ENCODE measurements at regions of chr2 and their contacts with region 1.

Region 1: GRCh38 chr2:223837287-223838061 is at the start of gene AP1S3:
- DNase-seq: peak; percentile 91
- H3K4me3 Mint-ChIP-seq: peak within 1 kb of the TSS; percentile 90
- H3K27ac Mint-ChIP-seq: peak within 1 kb of the TSS; percentile 83
- H3K4me1 Mint-ChIP-seq: peaks cover 13% of the 10 kb centered on the region
- H3K27me3 Mint-ChIP-seq: no peaks in the 10 kb centered on the region
- total RNA-seq, gene AP1S3: 14.1 and 17.4 TPM in 2 replicates

Region 2: GRCh38 chr2:223727562-223727961 is 109.9 kb before region 1 on chr2:
- intact Hi-C with region 1: loop called (anchors 10 kb)
- DNase-seq: peak; percentile 79
- H3K4me3 Mint-ChIP-seq: no peak overlapping the region
- H3K27ac Mint-ChIP-seq: no peak overlapping the region
- H3K4me1 Mint-ChIP-seq: no peaks in the 10 kb centered on the region
- H3K27me3 Mint-ChIP-seq: no peaks in the 10 kb centered on the region

Region 3: GRCh38 chr2:223779877-223780276 is 57.6 kb before region 1 on chr2:
- intact Hi-C with region 1: no loop called
- DNase-seq: peak; percentile 80
- H3K4me3 Mint-ChIP-seq: no peak overlapping the region
- H3K27ac Mint-ChIP-seq: no peak overlapping the region
- H3K4me1 Mint-ChIP-seq: no peaks in the 10 kb centered on the region
- H3K27me3 Mint-ChIP-seq: no peaks in the 10 kb centered on the region

Region 4: GRCh38 chr2:223944703-223945531 is 107.4 kb after region 1 on chr2 and contains the start of gene WDFY1:
- intact Hi-C with region 1: loop called (anchors 5 kb)
- DNase-seq: peak; percentile 94
- H3K4me3 Mint-ChIP-seq: peak within 1 kb of the TSS; percentile 91
- H3K27ac Mint-ChIP-seq: peak within 1 kb of the TSS; percentile 94
- H3K4me1 Mint-ChIP-seq: peaks cover 54% of the 10 kb centered on the region
- H3K27me3 Mint-ChIP-seq: no peaks in the 10 kb centered on the region
- total RNA-seq, gene WDFY1: 25.3 and 27.8 TPM in 2 replicates

Region 5: DNA sequence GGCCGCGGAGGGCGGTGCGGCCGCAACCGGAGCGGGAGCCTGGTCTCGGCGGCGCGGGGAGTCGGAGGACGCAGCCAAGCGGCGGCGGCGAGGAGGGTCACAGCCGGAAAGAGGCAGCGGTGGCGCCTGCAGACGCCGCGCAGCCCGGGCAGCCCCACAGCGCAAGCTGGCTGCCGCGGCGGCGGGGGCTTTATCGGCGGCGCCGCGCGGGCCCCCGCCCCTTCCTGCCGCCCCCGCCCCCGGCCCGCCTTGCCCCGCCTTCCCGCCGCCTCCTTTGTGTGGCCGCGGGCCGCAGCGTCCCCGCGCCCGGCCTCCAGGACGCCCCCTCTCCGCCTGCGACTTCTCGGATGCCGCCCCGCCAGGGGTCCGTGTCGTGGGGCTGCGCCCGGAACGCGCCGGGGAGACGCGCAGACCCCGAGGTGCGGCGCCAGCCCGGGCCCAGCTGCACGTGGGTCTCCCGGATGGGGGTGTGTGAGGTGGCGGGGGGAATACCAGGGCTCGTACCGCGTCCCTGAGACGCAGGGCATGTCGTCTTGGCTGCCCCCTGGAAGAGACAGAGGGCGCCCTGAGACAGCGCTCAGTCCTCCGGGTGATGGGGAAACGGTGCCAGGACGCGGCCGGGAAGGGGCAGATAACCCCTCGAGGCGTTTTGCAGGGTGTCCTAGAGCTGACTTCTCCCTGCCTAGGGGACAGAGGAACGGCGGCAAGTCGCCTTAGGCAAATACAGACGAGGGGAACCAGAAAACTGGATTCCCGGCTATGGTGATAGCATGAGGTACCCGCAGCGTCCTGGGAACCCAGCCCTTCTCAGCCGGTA is 201.9 kb after region 1 on chr2 and contains the start of gene SERPINE2:
- intact Hi-C with region 1: loop called (anchors 5 kb)
- DNase-seq: peak; percentile 87
- H3K4me3 Mint-ChIP-seq: peak within 1 kb of the TSS; percentile 97
- H3K27ac Mint-ChIP-seq: peak within 1 kb of the TSS; percentile 49
- H3K4me1 Mint-ChIP-seq: peaks cover 23% of the 10 kb centered on the region
- H3K27me3 Mint-ChIP-seq: peaks cover 49% of the 10 kb centered on the region
- total RNA-seq, gene SERPINE2: 23.2 and 23.9 TPM in 2 replicates

Measured in activated CD4-positive, alpha-beta T cell treated with anti-CD3 and anti-CD28 coated beads, Interleukin-2, amount 10 ng/mL, durations not matched to agents 24 days and 14 days (primary cell).